Body of pancreas (tissue), 4 donors: ENCODE measurements at regions of chr16 and their contacts with region 1.

Region 1: DNA sequence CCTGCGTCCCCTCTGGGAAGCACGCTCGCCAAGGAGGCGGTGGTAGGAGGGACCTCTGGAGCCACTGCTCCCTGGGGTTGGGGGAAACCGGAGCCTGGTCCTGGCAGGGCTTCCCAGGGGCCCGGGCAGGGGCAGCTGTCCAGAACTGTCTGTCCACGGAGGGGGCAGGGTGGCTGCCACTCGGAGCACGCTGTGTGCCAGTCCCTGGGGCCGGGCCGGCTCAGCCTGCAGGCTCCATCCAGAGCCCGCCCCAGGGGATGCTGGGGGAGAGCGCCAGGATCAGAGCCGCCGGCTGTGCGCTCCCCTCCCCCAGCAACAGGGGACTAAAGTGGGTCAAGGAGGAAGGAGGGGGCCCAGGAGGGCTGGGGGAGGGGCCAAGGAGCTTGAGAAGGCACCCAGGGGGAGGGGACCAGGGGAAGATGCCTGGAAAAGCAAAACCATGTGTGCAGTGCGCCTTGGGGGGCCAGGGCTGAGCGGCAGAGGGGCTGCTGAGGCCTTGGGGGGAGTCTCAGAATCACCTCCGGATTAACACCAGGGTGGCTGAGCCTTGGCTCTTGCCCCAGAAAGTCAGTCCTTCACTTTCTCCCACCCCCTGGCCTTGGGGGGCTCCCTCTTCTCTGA is 21.3 kb downstream of the ZNF423 start:
- DNase-seq: peak in 2 of 4 donors; percentile 28 to 32
- ATAC-seq: no peak
- H3K4me3 ChIP-seq: no peak overlapping the region
- H3K27ac ChIP-seq: peak overlapping the region in 2 of 4 donors; percentile 31 to 61
- H3K4me1 ChIP-seq: peaks cover 21% of the 10 kb centered on the region
- H3K27me3 ChIP-seq: no peaks in the 10 kb centered on the region
- CTCF ChIP-seq: no peak
- POLR2A ChIP-seq: no peak

Region 2: GRCh38 chr16:49776085-49776595 is 58.5 kb before region 1 on chr16:
- intact Hi-C with region 1: loop called (anchors 10 kb)
- DNase-seq: no peak
- ATAC-seq: peak; percentile 38
- H3K4me3 ChIP-seq: no peak overlapping the region
- H3K27ac ChIP-seq: no peak overlapping the region
- H3K4me1 ChIP-seq: no peaks in the 10 kb centered on the region
- H3K27me3 ChIP-seq: no peaks in the 10 kb centered on the region
- CTCF ChIP-seq: no peak
- POLR2A ChIP-seq: no peak